ENCODE measurements at regions of chr12 and their contacts with region 1.

Region 1: GRCh38 chr12:129844662-129845220 is 59.1 kb downstream of the TMEM132D start:
- DNase-seq: no peak
- ATAC-seq: no peak
- H3K4me3 ChIP-seq: no peak overlapping the region
- H3K27ac ChIP-seq: no peak overlapping the region
- H3K4me1 ChIP-seq: no peaks in the 10 kb centered on the region
- H3K27me3 ChIP-seq: peaks cover 2% of the 10 kb centered on the region; the same call in 1 of the 2 replicates
- CTCF ChIP-seq: no peak

Region 2: GRCh38 chr12:129520771-129521170 is 324.0 kb before region 1 on chr12:
- CTCF ChIA-PET with region 1: no interaction called
- POLR2A ChIA-PET with region 1: no interaction called
- in situ Hi-C with region 1: no loop called
- intact Hi-C with region 1: no loop called
- DNase-seq: no peak
- ATAC-seq: no peak
- H3K4me3 ChIP-seq: no peak overlapping the region
- H3K27ac ChIP-seq: no peak overlapping the region
- H3K4me1 ChIP-seq: no peaks in the 10 kb centered on the region
- H3K27me3 ChIP-seq: no peaks in the 10 kb centered on the region
- CTCF ChIP-seq: no peak

Region 3: DNA sequence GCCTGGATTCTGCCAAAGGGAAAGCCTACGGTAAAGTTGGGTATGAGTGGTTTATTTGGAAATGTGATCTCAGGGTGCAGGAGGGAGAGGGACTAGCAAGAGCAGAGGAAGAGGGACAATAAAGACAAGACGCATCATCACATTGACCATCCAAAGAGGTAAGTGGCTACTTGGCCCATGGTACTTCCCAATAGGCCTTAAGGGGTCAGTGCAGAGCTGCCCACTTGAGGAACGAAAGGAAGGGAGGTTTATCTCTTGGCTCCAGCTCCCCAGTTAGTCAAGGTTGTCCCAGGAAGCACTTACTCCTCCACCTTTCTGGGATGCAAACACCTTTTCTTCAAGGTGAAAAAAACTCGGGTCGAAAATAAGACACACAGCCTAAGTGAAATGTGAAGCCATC is 264.9 kb before region 1 on chr12:
- CTCF ChIA-PET with region 1: no interaction called
- POLR2A ChIA-PET with region 1: no interaction called
- in situ Hi-C with region 1: no loop called
- intact Hi-C with region 1: no loop called
- DNase-seq: no peak
- ATAC-seq: no peak
- H3K4me3 ChIP-seq: no peak overlapping the region
- H3K27ac ChIP-seq: no peak overlapping the region
- H3K4me1 ChIP-seq: no peaks in the 10 kb centered on the region
- H3K27me3 ChIP-seq: no peaks in the 10 kb centered on the region
- CTCF ChIP-seq: no peak

Region 4: DNA sequence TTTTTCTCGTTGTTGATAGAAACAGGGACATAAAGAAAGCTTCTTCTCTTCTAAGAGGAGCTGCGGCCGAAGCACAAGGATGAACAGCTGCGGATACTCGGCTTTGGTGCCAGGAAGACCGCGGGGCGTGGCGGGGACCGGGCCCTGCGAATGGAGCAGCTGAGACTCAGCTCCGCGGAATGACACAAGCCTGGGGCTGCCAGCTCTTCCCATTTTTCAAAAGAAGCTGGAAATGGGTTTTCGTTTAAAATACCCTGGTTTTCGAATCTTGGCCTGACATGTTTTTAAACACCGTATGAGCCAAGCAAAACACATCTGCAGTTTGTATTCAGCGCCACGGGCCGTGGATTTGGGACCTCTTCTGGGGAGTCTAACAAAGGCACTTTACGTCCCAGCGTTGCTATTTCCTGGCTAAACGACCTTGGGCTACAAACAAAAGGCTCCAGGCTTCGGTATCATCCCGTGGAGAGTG is 172.9 kb after region 1 on chr12:
- CTCF ChIA-PET with region 1: no interaction called
- POLR2A ChIA-PET with region 1: no interaction called
- in situ Hi-C with region 1: no loop called
- intact Hi-C with region 1: no loop called
- DNase-seq: no peak
- ATAC-seq: no peak
- H3K4me3 ChIP-seq: no peak overlapping the region
- H3K27ac ChIP-seq: no peak overlapping the region
- H3K4me1 ChIP-seq: no peaks in the 10 kb centered on the region
- H3K27me3 ChIP-seq: 0 out of 2 replicates have a peak, but pooled peaks cover 2% of the 10 kb centered on the region
- CTCF ChIP-seq: no peak

Region 5: GRCh38 chr12:130281153-130281799 is 436.5 kb after region 1 on chr12:
- CTCF ChIA-PET with region 1: interaction called, 12 read pairs
- POLR2A ChIA-PET with region 1: no interaction called
- in situ Hi-C with region 1: no loop called
- intact Hi-C with region 1: no loop called
- DNase-seq: no peak
- ATAC-seq: no peak; the same call in 1 of the 2 replicates
- H3K4me3 ChIP-seq: no peak overlapping the region
- H3K27ac ChIP-seq: no peak overlapping the region
- H3K4me1 ChIP-seq: no peaks in the 10 kb centered on the region
- H3K27me3 ChIP-seq: no peaks in the 10 kb centered on the region
- CTCF ChIP-seq: peak; percentile 83